ENCODE measurements at regions of chr21 and their contacts with region 1.

Region 1: DNA sequence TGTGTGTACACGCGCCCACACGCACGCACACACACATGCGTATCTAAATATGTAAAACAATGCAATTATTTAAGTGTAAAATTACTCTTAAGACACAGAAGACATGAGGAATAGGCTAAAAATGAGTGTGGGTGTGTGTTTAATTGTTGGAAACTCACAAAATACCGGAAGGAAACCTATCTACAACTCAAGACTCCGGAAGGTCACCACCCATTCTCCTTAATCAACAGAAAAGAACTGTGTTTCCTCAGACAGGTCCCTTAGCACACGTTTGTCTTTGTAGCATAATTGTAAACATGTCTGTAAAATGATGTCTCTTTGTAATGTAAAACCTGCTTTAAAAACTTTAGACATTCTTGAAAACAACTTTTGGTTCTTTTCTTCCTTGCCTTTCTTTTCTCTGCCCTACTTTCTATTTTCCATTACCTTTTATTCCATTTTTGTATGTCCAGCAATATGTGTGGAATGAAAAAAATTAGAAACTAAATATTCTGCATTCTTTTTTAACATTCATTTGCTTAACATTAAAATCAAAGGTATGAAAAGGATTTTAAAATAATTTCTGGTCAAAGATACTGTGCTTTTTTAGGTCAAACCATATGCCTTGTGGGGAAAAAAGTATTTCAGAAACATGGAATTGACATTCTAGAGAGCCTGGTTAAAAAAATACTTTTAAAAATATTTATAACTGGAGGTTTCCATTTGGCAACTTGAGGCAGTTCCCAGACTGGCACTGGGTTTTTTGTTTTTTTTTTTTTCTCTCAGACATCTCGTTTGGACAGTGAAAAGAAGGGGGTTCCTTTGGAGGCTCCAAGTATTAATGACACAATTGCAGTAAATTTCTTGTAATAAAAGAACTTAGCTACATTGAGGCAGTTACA is 46.2 kb downstream of the ATP5PF start:
- DNase-seq: no peak

Region 2: GRCh38 chr21:25670726-25671125 is 17.8 kb before region 1 on chr21:
- intact Hi-C with region 1: loop called (anchors 1 kb)
- DNase-seq: no peak

Region 3: DNA sequence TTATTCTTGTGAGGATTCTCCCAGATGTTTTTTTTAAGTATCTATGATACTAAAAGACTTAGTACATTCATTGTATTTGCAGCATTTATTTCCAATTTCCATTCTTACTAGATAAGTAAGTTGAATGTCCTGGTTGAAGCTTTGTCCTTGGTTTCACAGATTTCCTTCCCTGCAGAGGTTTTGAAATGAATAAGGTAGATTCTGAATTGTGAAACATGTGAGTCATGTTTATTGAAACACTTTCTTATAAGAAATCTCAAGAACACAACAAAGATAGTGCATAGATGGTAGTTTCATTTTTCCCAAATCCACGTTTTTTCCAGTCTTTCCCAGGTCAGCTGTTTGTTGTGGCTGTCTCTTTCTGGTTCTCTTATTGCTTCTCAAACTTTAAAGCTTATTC is 71.1 kb after region 1 on chr21:
- intact Hi-C with region 1: no loop called
- DNase-seq: no peak

Measured in cardiac septum (tissue), 1 donor.